Activated CD8-positive, alpha-beta T cell treated with anti-CD3 and anti-CD28 coated beads, Interleukin-2, amount 10 ng/mL, durations not matched to agents 7 days and 5 days (primary cell): ENCODE measurements at regions of chr2 and their contacts with region 1.

Region 1: GRCh38 chr2:179020156-179020750 is 29.7 kb downstream of the CCDC141 start:
- DNase-seq: peak; percentile 70
- ATAC-seq: peak; percentile 87
- H3K4me3 Mint-ChIP-seq: no peak overlapping the region
- H3K27ac Mint-ChIP-seq: no peak overlapping the region
- H3K4me1 Mint-ChIP-seq: peaks cover 28% of the 10 kb centered on the region
- H3K27me3 Mint-ChIP-seq: no peaks in the 10 kb centered on the region

Region 2: DNA sequence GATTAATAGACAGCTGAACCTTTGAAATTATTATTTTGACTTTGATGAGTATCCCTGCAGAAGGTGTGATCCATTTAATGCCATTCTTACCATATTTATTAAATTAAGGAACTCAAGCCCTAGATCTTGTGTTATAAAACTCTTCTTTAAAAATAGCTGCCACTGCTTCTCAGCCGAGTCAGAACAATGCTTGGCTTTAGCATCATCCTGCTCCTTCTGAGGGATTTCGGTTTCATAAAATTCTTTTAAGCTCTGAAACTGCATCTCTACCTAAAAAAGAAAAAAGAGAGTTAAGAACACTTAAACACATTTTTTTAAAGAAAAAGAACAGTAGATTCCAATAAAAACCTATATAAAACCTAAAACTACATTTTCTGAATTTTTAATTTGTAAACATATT is 142.4 kb before region 1 on chr2:
- CTCF ChIA-PET with region 1: no interaction called
- POLR2A ChIA-PET with region 1: no interaction called
- DNase-seq: no peak
- ATAC-seq: no peak
- H3K4me3 Mint-ChIP-seq: no peak overlapping the region
- H3K27ac Mint-ChIP-seq: no peak overlapping the region
- H3K4me1 Mint-ChIP-seq: no peaks in the 10 kb centered on the region
- H3K27me3 Mint-ChIP-seq: no peaks in the 10 kb centered on the region

Region 3: DNA sequence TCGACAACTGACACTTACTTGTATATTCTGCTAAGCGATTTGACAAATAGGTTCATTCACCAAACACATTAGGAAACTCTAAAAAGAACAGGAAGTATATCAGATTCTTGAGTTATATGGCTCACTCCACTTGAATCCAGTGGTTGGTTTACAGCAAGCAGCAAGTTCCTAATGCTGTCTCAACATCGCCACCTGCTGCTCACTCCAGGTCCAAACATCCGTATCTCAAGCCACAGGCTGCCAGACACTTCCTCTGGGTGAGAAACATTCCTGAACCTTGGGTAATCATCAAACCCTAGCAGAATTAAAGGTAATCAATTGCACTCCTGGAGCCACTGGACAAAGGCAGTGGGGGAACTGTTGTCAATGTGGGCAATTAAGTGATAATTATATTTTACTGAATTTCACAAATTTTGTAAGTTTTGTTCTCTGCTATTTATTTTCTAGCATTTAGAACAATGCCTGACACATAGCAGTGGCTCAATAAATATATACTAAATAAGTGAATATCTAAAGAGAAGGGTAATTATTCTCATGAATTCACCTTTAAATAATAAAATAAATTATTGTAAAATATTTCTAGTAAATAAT is 105.9 kb before region 1 on chr2:
- CTCF ChIA-PET with region 1: interaction called, 29 read pairs
- POLR2A ChIA-PET with region 1: interaction called, 3 read pairs
- DNase-seq: peak; percentile 86
- ATAC-seq: peak; percentile 78
- H3K4me3 Mint-ChIP-seq: no peak overlapping the region
- H3K27ac Mint-ChIP-seq: peak overlapping the region; percentile 62
- H3K4me1 Mint-ChIP-seq: peaks cover 20% of the 10 kb centered on the region
- H3K27me3 Mint-ChIP-seq: no peaks in the 10 kb centered on the region

Region 4: DNA sequence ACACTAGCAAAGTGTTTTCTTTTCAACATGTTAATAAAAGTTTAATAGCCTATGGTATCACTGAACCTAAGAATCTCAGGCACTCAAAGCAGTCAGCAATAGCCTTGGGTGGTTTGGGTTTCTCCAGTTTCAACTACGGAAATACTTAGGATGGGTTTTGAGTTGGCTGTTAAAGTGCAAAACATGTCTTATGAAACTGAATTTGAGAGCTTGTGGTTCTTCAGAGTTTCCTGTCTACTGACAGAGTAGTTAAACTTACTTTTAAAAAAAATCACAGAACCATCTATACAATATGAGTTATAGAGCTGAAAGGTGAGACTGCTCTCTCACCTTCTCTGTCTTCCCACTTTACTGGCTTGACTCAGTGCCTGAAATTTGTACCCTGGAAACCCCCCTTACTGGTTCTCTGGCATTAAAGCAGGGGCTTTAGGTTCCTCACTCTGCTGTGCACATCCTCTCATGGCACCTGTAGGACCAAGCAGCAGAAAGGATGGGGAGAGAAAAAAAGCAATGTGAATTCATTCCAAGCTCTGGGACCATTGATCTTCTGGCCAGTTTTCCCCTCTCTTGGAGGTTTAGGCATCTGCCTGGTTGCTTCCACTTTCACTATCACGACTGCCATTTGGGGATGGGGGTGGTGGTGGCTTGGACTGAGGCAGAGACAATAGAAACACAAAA is 11.6 kb after region 1 on chr2:
- CTCF ChIA-PET with region 1: interaction called, 70 read pairs
- POLR2A ChIA-PET with region 1: interaction called, 8 read pairs
- DNase-seq: peak; percentile 50
- ATAC-seq: peak; percentile 89
- H3K4me3 Mint-ChIP-seq: peak overlapping the region; percentile 76
- H3K27ac Mint-ChIP-seq: peak overlapping the region; percentile 97
- H3K4me1 Mint-ChIP-seq: peaks cover 41% of the 10 kb centered on the region
- H3K27me3 Mint-ChIP-seq: no peaks in the 10 kb centered on the region

Region 5: DNA sequence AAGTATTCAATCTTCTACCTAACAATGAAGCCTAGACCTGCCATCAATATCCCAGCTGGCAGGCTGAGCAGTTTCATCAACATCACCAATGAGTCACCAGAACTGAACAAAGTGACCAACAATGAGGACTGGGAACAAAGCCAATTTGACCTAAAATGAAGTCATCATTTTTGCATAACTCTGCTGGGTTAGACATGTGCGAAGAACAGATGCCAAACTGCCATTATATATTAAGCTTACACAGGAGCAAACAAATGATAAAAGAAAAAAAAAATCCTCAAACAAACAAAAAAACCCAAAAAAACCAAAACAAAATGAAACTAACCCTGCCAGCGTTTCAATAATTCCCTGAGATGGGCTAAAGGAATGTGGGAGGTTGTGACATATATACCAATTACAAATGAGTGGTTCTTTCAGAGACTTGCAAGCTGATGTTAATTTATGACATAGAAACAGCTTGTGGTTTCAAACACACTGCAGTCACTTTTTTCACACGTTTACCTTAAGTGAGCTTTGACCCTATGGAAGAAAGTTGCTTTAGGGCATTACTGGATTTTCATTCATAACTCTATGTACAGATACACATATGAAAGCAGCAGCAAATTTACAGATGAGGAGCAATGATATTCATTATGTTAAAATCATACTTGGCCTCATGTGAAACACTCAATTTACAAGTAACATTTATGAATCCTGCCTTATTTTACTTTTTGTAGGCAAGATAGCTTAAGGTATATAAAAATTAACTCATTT is 86.6 kb after region 1 on chr2:
- CTCF ChIA-PET with region 1: interaction called, 13 read pairs
- POLR2A ChIA-PET with region 1: no interaction called
- DNase-seq: no peak
- ATAC-seq: peak; percentile 45
- H3K4me3 Mint-ChIP-seq: peak overlapping the region; percentile 10
- H3K27ac Mint-ChIP-seq: peak overlapping the region; percentile 71
- H3K4me1 Mint-ChIP-seq: peaks cover 41% of the 10 kb centered on the region
- H3K27me3 Mint-ChIP-seq: no peaks in the 10 kb centered on the region